CD8-positive, alpha-beta T cell (primary cell): ENCODE measurements at regions of chr6 and their contacts with region 1.

Region 1: GRCh38 chr6:125593746-125594145 is 155.7 kb upstream of the HEY2 start:
- DNase-seq: no peak
- ATAC-seq: no peak
- H3K4me3 ChIP-seq: no peak overlapping the region
- H3K4me3 Mint-ChIP-seq: no peak overlapping the region
- H3K27ac ChIP-seq: no peak overlapping the region
- H3K27ac Mint-ChIP-seq: no peak overlapping the region
- H3K4me1 ChIP-seq: no peaks in the 10 kb centered on the region
- H3K4me1 Mint-ChIP-seq: no peaks in the 10 kb centered on the region
- H3K27me3 ChIP-seq: no peaks in the 10 kb centered on the region
- H3K27me3 Mint-ChIP-seq: peaks cover 10% of the 10 kb centered on the region
- CTCF ChIP-seq: no peak

Region 2: GRCh38 chr6:125512621-125513020 is 81.1 kb before region 1 on chr6:
- CTCF ChIA-PET with region 1: no interaction called
- POLR2A ChIA-PET with region 1: no interaction called
- intact Hi-C with region 1: no loop called
- DNase-seq: peak in 2 of 9 experiments; percentile 3 to 8
- ATAC-seq: no peak
- H3K4me3 ChIP-seq: no peak overlapping the region
- H3K4me3 Mint-ChIP-seq: no peak overlapping the region
- H3K27ac ChIP-seq: no peak overlapping the region
- H3K27ac Mint-ChIP-seq: no peak overlapping the region
- H3K4me1 ChIP-seq: no peaks in the 10 kb centered on the region
- H3K4me1 Mint-ChIP-seq: no peaks in the 10 kb centered on the region
- H3K27me3 ChIP-seq: no peaks in the 10 kb centered on the region
- H3K27me3 Mint-ChIP-seq: peaks cover 5% of the 10 kb centered on the region
- CTCF ChIP-seq: no peak

Region 3: GRCh38 chr6:125528621-125529041 is 65.1 kb before region 1 on chr6:
- CTCF ChIA-PET with region 1: no interaction called
- POLR2A ChIA-PET with region 1: no interaction called
- intact Hi-C with region 1: no loop called
- DNase-seq: no peak
- ATAC-seq: no peak
- H3K4me3 ChIP-seq: no peak overlapping the region
- H3K4me3 Mint-ChIP-seq: no peak overlapping the region
- H3K27ac ChIP-seq: no peak overlapping the region
- H3K27ac Mint-ChIP-seq: no peak overlapping the region
- H3K4me1 ChIP-seq: no peaks in the 10 kb centered on the region
- H3K4me1 Mint-ChIP-seq: no peaks in the 10 kb centered on the region
- H3K27me3 ChIP-seq: no peaks in the 10 kb centered on the region
- H3K27me3 Mint-ChIP-seq: peaks cover 38% of the 10 kb centered on the region
- CTCF ChIP-seq: no peak

Region 4: DNA sequence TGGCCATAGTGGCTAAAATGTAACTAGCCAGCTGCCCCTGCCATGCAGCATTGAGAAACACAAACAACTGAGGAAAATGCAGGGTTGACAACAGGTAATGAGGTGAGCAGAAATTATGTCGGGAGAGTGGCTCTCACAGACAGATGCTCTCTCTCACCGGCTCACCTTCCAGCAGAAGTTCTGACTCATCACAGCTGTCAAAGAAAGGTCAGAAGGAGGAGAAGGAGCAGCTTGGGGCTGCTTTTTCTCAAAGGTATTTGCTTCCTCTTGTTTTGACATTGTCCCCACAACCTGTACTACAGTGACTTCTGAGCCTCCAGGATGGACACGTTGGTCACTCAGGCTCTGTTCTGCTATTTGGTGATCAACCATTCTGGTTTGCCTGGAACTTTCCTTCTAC is 34.8 kb before region 1 on chr6:
- CTCF ChIA-PET with region 1: no interaction called
- POLR2A ChIA-PET with region 1: no interaction called
- intact Hi-C with region 1: loop called in 1 of 2 experiments (anchors 1 kb)
- DNase-seq: no peak
- ATAC-seq: no peak
- H3K4me3 ChIP-seq: no peak overlapping the region
- H3K4me3 Mint-ChIP-seq: no peak overlapping the region
- H3K27ac ChIP-seq: no peak overlapping the region
- H3K27ac Mint-ChIP-seq: no peak overlapping the region
- H3K4me1 ChIP-seq: no peaks in the 10 kb centered on the region
- H3K4me1 Mint-ChIP-seq: no peaks in the 10 kb centered on the region
- H3K27me3 ChIP-seq: no peaks in the 10 kb centered on the region
- H3K27me3 Mint-ChIP-seq: peaks cover 17% of the 10 kb centered on the region
- CTCF ChIP-seq: no peak